ENCODE measurements at regions of chr16 and their contacts with region 1.

Region 1: DNA sequence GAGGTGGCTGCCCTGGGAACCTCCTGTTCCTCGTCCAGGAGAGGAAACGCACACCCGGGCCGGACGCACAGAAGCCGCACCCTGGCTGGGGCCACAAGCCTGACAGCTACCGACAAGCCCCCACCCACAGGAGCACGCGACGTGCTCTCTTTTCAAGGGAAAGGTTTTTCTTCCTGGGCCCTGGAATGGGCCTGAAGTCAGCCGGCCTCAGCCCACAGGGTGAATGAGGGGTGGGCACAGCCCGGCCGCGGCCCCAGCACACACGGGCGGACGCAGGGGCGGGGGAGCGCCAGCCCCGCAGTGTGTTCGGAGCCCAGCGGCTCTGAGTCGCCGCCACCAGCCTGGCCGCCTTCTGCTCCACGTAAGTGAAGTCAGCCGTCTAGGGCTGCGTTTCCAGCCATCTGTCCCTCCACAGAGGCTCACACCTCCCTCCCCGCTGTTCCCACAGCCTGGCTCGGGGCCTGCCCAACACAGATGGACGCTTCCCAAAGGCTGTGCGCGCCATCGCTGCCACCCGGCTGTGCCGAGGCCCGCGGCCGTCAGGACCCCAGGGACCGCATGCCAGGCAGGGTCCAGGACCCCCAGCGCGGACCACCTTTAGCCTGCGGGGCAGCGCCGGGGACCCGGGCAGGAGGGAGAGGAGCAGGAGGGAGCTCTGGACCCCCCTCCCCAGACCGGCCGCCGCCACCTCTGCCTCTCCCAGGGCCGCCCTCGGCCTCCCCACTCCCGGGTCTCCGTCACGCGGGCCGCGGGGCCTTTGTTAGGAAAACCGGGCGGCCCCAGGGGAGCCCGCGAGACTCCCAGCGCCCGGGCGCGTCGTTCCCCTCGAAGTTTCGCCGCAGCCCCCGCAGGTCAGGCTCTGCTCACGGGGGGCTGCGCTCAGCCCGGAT is 36.8 kb downstream of the CBFA2T3 start:
- DNase-seq: peak; percentile 69
- CTCF ChIP-seq: no peak

Region 2: DNA sequence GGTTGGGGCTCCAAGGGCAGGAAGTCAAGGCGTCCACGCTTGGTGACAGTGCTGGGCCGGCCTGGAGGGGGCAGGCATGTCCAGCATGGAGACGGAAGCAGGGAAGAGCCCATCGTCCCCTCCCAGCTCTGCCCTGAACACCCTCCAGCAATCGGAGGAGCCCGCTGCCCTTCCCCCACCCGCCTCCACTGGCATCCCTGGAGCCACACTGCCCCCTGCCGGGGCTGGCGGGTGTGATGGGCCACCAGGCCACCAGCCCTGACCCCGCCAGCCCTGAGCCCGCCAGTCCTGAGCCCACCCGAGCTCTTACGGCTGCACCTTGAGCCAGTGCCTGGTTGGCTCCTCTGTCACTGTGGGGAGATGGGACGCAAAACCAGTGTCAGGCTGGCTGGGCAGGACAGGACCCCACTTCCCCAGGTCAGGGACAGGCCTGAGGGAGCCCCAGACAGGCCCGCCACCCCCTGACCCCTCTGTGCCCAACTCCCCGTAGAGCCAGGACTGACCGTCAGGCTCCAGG is 227.3 kb after region 1 on chr16:
- in situ Hi-C with region 1: loop called (anchors 10 kb)
- DNase-seq: peak; percentile 91
- CTCF ChIP-seq: peak; percentile 89

Region 3: DNA sequence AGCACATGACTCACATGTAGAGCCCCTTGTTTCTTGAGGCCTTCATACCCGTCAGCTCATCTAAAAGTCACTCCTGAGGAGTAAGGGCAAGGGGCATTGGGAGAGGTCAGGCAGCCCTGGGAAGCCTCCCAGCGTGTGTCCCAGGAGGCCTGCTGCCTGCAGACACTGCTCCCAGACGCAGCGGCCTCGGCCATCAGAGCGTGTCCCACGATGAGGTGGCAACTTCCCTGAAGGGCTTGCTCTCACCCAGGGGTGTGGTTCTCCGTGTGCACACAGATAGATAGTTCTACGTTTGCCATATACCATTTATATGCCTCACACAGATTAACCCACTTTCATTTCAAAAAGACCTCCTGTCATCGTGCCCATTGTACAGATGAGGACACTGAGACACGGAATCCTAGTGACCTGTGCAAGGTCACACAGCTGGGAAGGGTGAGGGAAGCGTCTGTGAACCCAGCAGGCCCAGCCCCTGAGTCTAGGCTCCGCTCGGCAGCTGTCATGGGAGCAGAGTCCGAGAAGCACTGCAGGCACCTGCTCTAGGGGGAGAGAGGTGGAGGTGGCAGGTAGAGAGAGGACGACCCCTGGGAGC is 991.2 kb after region 1 on chr16:
- in situ Hi-C with region 1: no loop called
- DNase-seq: no peak
- CTCF ChIP-seq: no peak

Measured in GM13976 (cell line).